Activated CD4-positive, alpha-beta T cell treated with anti-CD3 and anti-CD28 coated beads for 36 hours (primary cell): ENCODE measurements at regions of chr11 and their contacts with region 1.

Region 1: DNA sequence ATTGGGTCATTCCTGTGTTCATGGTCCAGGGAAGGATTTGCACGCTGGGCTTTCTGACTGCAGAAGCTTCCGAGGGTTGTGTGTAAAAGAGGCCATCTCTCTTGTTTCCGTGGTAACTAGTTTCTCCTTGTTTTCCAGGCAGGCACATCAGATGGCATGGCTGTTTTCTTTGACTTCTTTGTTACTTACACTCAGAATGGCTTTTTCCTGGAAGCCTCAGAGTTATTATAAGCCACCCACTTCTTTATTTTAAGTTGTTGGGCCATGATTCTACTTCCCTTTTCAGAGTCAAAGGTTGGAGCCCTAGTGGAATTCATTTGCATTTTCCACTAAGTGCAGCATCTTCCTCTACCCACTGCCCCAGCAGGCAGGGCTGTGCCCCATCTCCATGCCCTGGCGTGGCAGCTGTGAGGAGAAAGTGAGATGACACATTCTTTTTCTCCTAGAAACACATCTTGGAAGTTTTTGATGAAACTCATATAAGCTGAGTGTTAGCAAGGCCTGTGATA is 94.9 kb downstream of the PRR5L start:
- DNase-seq: peak; percentile 61
- ATAC-seq: peak; percentile 58
- H3K4me3 Mint-ChIP-seq: no peak overlapping the region
- H3K27ac Mint-ChIP-seq: peak overlapping the region; percentile 58
- H3K4me1 Mint-ChIP-seq: peaks cover 57% of the 10 kb centered on the region
- H3K27me3 Mint-ChIP-seq: no peaks in the 10 kb centered on the region

Region 2: DNA sequence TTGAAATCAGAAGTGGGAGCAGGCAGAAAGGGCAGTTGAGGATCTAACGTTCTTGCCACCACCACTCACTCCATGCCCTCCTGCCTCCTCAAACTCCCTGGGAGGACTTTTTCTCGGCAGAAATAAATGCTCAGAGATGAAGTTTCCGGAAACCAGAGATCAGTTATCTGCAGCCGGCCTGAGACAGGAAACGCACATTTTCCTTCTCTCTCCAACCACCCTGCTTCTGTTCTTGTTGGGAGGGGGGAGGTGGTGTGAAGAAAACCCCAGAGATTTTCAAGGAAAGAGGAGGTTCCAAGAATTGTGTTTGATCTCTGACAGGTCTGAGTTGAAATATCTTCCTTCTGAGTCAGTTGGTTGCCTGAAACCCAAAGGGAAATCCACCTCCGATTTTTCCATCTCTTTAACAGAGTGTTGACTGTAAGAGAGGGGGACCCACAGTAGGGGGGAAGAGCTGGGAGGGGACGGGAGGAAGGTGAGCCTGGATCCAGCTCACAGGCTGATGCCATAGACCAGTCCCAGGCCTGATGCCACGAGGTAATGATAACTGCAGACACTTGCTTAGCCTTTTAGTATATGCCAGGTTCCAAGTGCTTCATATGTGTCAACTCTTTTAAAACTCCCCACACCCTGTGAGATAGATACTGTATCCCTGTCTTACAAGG is 18.3 kb after region 1 on chr11:
- CTCF ChIA-PET with region 1: no interaction called
- POLR2A ChIA-PET with region 1: no interaction called
- intact Hi-C with region 1: loop called (anchors 1 kb)
- DNase-seq: peak; percentile 61
- ATAC-seq: peak; percentile 83
- H3K4me3 Mint-ChIP-seq: peak overlapping the region; percentile 17
- H3K27ac Mint-ChIP-seq: peak overlapping the region; percentile 91
- H3K4me1 Mint-ChIP-seq: peaks cover 59% of the 10 kb centered on the region
- H3K27me3 Mint-ChIP-seq: no peaks in the 10 kb centered on the region

Region 3: DNA sequence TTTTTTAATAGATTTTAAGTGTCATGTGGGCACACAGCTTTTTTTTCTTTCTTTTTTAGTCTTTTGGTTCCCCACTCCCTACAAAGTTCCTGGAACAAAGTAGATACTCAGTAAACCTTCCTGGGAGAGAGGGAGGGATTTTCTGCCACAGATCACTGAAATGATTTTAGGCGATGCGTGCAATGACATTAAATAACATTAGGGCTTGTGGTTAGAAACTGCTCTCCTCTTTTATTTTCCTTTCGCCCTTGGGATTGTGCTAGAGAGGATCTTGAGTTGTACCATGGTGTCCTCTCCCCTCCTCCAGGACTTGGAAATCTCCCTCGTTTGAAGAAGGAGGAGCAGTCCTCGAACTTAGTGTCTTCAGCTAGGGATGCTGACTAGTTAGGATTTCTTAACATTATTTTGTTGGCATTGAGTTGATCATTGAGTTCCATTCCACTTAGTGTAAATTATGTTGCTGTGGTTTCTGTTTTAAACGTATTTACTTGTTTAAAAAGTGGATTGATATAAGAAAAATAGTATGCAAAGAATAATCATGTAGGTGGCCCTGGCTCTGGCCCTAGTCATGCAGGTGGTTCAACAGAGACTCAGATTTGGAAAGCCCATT is 30.6 kb after region 1 on chr11:
- CTCF ChIA-PET with region 1: interaction called, 3 read pairs
- POLR2A ChIA-PET with region 1: interaction called, 3 read pairs
- intact Hi-C with region 1: loop called in 1 of 2 experiments (anchors 2 kb)
- DNase-seq: no peak
- ATAC-seq: no peak
- H3K4me3 Mint-ChIP-seq: peak overlapping the region; percentile 41
- H3K27ac Mint-ChIP-seq: peak overlapping the region; percentile 94
- H3K4me1 Mint-ChIP-seq: peaks cover 54% of the 10 kb centered on the region
- H3K27me3 Mint-ChIP-seq: peaks cover 7% of the 10 kb centered on the region

Region 4: GRCh38 chr11:36431429-36432092 is 40.5 kb after region 1 on chr11:
- CTCF ChIA-PET with region 1: no interaction called
- POLR2A ChIA-PET with region 1: no interaction called
- intact Hi-C with region 1: loop called in 1 of 2 experiments (anchors 5 kb)
- DNase-seq: peak; percentile 80
- ATAC-seq: peak; percentile 100
- H3K4me3 Mint-ChIP-seq: no peak overlapping the region
- H3K27ac Mint-ChIP-seq: peak overlapping the region; percentile 56
- H3K4me1 Mint-ChIP-seq: peaks cover 19% of the 10 kb centered on the region
- H3K27me3 Mint-ChIP-seq: no peaks in the 10 kb centered on the region

Region 5: DNA sequence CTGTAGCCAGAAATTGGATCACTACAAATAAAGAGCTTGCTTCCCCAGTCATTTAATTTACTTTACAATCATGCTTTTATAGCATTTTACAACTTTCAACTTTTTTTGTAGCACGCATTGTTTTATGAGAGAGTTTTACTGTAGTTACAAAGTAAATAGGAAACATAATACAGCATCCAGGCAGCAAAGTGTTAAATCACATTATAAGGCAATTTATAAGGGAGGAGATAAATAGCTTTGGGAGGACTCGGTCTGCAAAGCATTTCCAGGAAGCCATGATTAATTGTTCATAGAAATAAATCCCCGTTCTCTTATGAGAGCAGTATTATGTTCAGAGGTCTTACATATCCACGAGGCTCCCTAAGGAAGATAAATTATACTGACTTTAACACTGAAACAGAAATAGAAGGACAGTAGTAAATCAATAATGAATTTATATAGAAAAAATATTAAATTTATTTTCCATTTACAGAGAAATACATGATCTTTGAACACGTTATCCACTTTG is 999.6 kb after region 1 on chr11:
- CTCF ChIA-PET with region 1: no interaction called
- POLR2A ChIA-PET with region 1: no interaction called
- intact Hi-C with region 1: no loop called
- DNase-seq: no peak
- ATAC-seq: no peak
- H3K4me3 Mint-ChIP-seq: no peak overlapping the region
- H3K27ac Mint-ChIP-seq: no peak overlapping the region
- H3K4me1 Mint-ChIP-seq: no peaks in the 10 kb centered on the region
- H3K27me3 Mint-ChIP-seq: no peaks in the 10 kb centered on the region